CD8-positive, alpha-beta T cell (primary cell): ENCODE measurements at regions of chr1 and their contacts with region 1.

Region 1: GRCh38 chr1:179809506-179810366 is 66.6 kb downstream of the FAM163A start:
- DNase-seq: peak; percentile 37 to 87 (median 71)
- ATAC-seq: peak; percentile 84
- H3K4me3 ChIP-seq: no peak overlapping the region
- H3K4me3 Mint-ChIP-seq: peak overlapping the region; percentile 1
- H3K27ac ChIP-seq: no peak overlapping the region
- H3K27ac Mint-ChIP-seq: no peak overlapping the region
- H3K4me1 ChIP-seq: peaks cover 11% of the 10 kb centered on the region
- H3K4me1 Mint-ChIP-seq: peaks cover 12% of the 10 kb centered on the region
- H3K27me3 ChIP-seq: no peaks in the 10 kb centered on the region
- H3K27me3 Mint-ChIP-seq: peaks cover 5% of the 10 kb centered on the region
- CTCF ChIP-seq: peak; percentile 82

Region 2: DNA sequence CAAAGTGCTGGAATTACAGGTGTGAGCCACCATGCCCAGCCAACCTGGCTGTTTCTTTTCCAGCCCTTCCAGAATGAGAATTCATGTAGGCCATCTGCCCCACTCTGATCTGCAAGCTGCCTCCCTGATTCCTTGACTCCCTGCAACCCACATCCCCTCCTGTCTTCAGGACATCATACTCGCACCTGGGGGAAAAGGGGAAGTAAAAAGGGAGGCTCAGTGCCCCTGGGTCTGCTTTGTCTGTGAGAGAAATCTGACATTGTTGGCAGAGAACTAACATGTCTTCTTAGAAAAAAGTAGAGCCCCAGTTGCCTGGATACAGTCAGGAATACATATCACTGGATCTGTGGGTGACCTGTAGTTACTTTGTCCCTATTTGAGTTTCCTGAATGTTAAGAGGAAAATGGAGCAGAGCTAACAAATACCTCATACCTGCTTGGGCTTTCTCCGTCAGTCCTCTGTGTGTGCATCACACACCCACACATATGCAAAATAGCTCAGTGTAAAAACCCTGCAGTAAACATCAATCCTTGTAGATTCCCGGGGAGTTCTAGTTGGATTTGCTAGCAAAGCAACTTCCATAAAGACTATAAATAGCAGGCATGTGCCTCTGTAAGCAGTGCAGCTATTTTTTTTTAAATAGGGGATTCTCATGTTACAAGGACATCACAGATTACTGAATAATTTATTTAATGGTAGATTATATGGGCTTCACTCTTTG is 1234.0 kb before region 1 on chr1:
- CTCF ChIA-PET with region 1: no interaction called
- POLR2A ChIA-PET with region 1: no interaction called
- intact Hi-C with region 1: no loop called
- DNase-seq: peak in 1 of 9 experiments; percentile 7
- ATAC-seq: no peak
- H3K4me3 ChIP-seq: no peak overlapping the region
- H3K4me3 Mint-ChIP-seq: no peak overlapping the region
- H3K27ac ChIP-seq: no peak overlapping the region
- H3K27ac Mint-ChIP-seq: no peak overlapping the region
- H3K4me1 ChIP-seq: no peaks in the 10 kb centered on the region
- H3K4me1 Mint-ChIP-seq: no peaks in the 10 kb centered on the region
- H3K27me3 ChIP-seq: no peaks in the 10 kb centered on the region
- H3K27me3 Mint-ChIP-seq: no peaks in the 10 kb centered on the region
- CTCF ChIP-seq: no peak

Region 3: GRCh38 chr1:178774263-178774662 is 1035.5 kb before region 1 on chr1:
- CTCF ChIA-PET with region 1: interaction called, 3 read pairs
- POLR2A ChIA-PET with region 1: no interaction called
- intact Hi-C with region 1: loop called in 1 of 2 experiments (anchors 5 kb)
- DNase-seq: peak in 2 of 9 experiments; percentile 19 to 38
- ATAC-seq: no peak
- H3K4me3 ChIP-seq: no peak overlapping the region
- H3K4me3 Mint-ChIP-seq: no peak overlapping the region
- H3K27ac ChIP-seq: no peak overlapping the region
- H3K27ac Mint-ChIP-seq: no peak overlapping the region
- H3K4me1 ChIP-seq: no peaks in the 10 kb centered on the region
- H3K4me1 Mint-ChIP-seq: no peaks in the 10 kb centered on the region
- H3K27me3 ChIP-seq: no peaks in the 10 kb centered on the region
- H3K27me3 Mint-ChIP-seq: no peaks in the 10 kb centered on the region
- CTCF ChIP-seq: peak; percentile 56

Region 4: GRCh38 chr1:179034720-179035119 is 775.0 kb before region 1 on chr1:
- CTCF ChIA-PET with region 1: no interaction called
- POLR2A ChIA-PET with region 1: no interaction called
- intact Hi-C with region 1: loop called in 1 of 2 experiments (anchors 2 kb)
- DNase-seq: peak in 1 of 9 experiments; percentile 41
- ATAC-seq: peak; percentile 55
- H3K4me3 ChIP-seq: no peak overlapping the region
- H3K4me3 Mint-ChIP-seq: no peak overlapping the region
- H3K27ac ChIP-seq: no peak overlapping the region
- H3K27ac Mint-ChIP-seq: peak overlapping the region; percentile 78
- H3K4me1 ChIP-seq: peaks cover 40% of the 10 kb centered on the region
- H3K4me1 Mint-ChIP-seq: peaks cover 80% of the 10 kb centered on the region
- H3K27me3 ChIP-seq: no peaks in the 10 kb centered on the region
- H3K27me3 Mint-ChIP-seq: no peaks in the 10 kb centered on the region
- CTCF ChIP-seq: no peak

Region 5: GRCh38 chr1:179706339-179706941 is 103.3 kb before region 1 on chr1:
- CTCF ChIA-PET with region 1: interaction called, 361 read pairs
- POLR2A ChIA-PET with region 1: interaction called, 13 read pairs
- intact Hi-C with region 1: loop called (anchors 1 kb)
- DNase-seq: peak; percentile 23 to 76 (median 58)
- ATAC-seq: peak; percentile 32
- H3K4me3 ChIP-seq: no peak overlapping the region
- H3K4me3 Mint-ChIP-seq: no peak overlapping the region
- H3K27ac ChIP-seq: no peak overlapping the region
- H3K27ac Mint-ChIP-seq: no peak overlapping the region
- H3K4me1 ChIP-seq: peaks cover 6% of the 10 kb centered on the region
- H3K4me1 Mint-ChIP-seq: peaks cover 7% of the 10 kb centered on the region
- H3K27me3 ChIP-seq: no peaks in the 10 kb centered on the region
- H3K27me3 Mint-ChIP-seq: peaks cover 4% of the 10 kb centered on the region
- CTCF ChIP-seq: peak; percentile 65

Region 6: DNA sequence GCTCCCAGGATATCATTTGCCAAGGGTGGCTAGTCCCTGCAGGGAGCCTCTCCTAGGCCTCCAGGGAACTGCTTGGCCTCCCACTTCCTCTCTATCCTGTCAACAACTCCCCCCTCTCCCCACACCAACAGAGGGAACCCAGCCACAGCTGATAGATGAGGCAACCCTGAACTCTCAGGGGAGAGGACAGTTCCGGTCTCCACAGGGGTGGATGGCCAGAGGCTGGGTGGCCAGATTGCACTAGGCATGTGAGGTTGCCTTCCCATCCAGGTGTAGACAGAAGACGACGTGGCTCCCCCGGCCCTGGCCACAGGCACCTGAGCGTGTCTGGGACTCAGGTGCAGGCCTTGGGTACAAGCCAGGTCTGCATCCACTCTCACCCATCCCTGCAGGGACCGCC is 14.5 kb after region 1 on chr1:
- CTCF ChIA-PET with region 1: interaction called, 28 read pairs
- POLR2A ChIA-PET with region 1: interaction called, 7 read pairs
- intact Hi-C with region 1: no loop called
- DNase-seq: no peak
- ATAC-seq: no peak
- H3K4me3 ChIP-seq: no peak overlapping the region
- H3K4me3 Mint-ChIP-seq: no peak overlapping the region
- H3K27ac ChIP-seq: no peak overlapping the region
- H3K27ac Mint-ChIP-seq: no peak overlapping the region
- H3K4me1 ChIP-seq: no peaks in the 10 kb centered on the region
- H3K4me1 Mint-ChIP-seq: no peaks in the 10 kb centered on the region
- H3K27me3 ChIP-seq: no peaks in the 10 kb centered on the region
- H3K27me3 Mint-ChIP-seq: peaks cover 4% of the 10 kb centered on the region
- CTCF ChIP-seq: no peak

Region 7: GRCh38 chr1:179882243-179883039 is 72.7 kb after region 1 on chr1 and contains the start of gene TOR1AIP1:
- CTCF ChIA-PET with region 1: interaction called, 7 read pairs
- POLR2A ChIA-PET with region 1: interaction called, 17 read pairs
- intact Hi-C with region 1: loop called in 1 of 2 experiments (anchors 2 kb)
- DNase-seq: peak; percentile 95 to 99 (median 97)
- ATAC-seq: peak; percentile 74
- H3K4me3 ChIP-seq: peak within 1 kb of the TSS; percentile 91 to 95
- H3K4me3 Mint-ChIP-seq: peak within 1 kb of the TSS; percentile 94
- H3K27ac ChIP-seq: peak within 1 kb of the TSS; percentile 98 to 99
- H3K27ac Mint-ChIP-seq: peak within 1 kb of the TSS; percentile 100
- H3K4me1 ChIP-seq: peaks cover 37% of the 10 kb centered on the region
- H3K4me1 Mint-ChIP-seq: peaks cover 59% of the 10 kb centered on the region
- H3K27me3 ChIP-seq: no peaks in the 10 kb centered on the region
- H3K27me3 Mint-ChIP-seq: no peaks in the 10 kb centered on the region
- CTCF ChIP-seq: peak; percentile 41
- total RNA-seq, gene TOR1AIP1: 108 to 110 TPM

Region 8: GRCh38 chr1:180040034-180040433 is 230.3 kb after region 1 on chr1:
- CTCF ChIA-PET with region 1: no interaction called
- POLR2A ChIA-PET with region 1: no interaction called
- intact Hi-C with region 1: no loop called
- DNase-seq: no peak
- ATAC-seq: no peak
- H3K4me3 ChIP-seq: no peak overlapping the region
- H3K4me3 Mint-ChIP-seq: no peak overlapping the region
- H3K27ac ChIP-seq: no peak overlapping the region
- H3K27ac Mint-ChIP-seq: no peak overlapping the region
- H3K4me1 ChIP-seq: no peaks in the 10 kb centered on the region
- H3K4me1 Mint-ChIP-seq: no peaks in the 10 kb centered on the region
- H3K27me3 ChIP-seq: no peaks in the 10 kb centered on the region
- H3K27me3 Mint-ChIP-seq: no peaks in the 10 kb centered on the region
- CTCF ChIP-seq: no peak

Region 9: DNA sequence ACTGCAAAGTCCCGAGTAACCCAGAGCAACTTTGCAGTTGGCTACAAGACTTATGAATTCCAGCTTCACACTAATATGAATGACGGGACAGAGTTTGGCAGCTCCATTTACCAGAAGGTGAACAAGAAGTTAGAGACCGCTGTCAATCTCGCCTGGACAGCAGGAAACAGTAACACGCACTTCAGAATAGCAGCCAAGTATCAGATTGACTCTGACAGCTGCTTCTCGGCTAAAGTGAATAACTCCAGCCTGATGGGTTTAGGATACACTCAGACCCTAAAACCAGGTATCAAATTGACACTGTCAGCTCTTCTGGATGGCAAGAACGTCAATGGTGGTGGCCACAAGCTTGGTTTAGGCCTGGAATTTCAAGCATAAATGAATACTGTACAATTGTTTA is 625.8 kb after region 1 on chr1:
- CTCF ChIA-PET with region 1: no interaction called
- POLR2A ChIA-PET with region 1: no interaction called
- intact Hi-C with region 1: no loop called
- DNase-seq: no peak
- ATAC-seq: no peak
- H3K4me3 ChIP-seq: no peak overlapping the region
- H3K4me3 Mint-ChIP-seq: no peak overlapping the region
- H3K27ac ChIP-seq: no peak overlapping the region
- H3K27ac Mint-ChIP-seq: no peak overlapping the region
- H3K4me1 ChIP-seq: no peaks in the 10 kb centered on the region
- H3K4me1 Mint-ChIP-seq: peaks cover 16% of the 10 kb centered on the region
- H3K27me3 ChIP-seq: no peaks in the 10 kb centered on the region
- H3K27me3 Mint-ChIP-seq: no peaks in the 10 kb centered on the region
- CTCF ChIP-seq: no peak